ENCODE measurements at regions of chr15 and their contacts with region 1.

Region 1: DNA sequence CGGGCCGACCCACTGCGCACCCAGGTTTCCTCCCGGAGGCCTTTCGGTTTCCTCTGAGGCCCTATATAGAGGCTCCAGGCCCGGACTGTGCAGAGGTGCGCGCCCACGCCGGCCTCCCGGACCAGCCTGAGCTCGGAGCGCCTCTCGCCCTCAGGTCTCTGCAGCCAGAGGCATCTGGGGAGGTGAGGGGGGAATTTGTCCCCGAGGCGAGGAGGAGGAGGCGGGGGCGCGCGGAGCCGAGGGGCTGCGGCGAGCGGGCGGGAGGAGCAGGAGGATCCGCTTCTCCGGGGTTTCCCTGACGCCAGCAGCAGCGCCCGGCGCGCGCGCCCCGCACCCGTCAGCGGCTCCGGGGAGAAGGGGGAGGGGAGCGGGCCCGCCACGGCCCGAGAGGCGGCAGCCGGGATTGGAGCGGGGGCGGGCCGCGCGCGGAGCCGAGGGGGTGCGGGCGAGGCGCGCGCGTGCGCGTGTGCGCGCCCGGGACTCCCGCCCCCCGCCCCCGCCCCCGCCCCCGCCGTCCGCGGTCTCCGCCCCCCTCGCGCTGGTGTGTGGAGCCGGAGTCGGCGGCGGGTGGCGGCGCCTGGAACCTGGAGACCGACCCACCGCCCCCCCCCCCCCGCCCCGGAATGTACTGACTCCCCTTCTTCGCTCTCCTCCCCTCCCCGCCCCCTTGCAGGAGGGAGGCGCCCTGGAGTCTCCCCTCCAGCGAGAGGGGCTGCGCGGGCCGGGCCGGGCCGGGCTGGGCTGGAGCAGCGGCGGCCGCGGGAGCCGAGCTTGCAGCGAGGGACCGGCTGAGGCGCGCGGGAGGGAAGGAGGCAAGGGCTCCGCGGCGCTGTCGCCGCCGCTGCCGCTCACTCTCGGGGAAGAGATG is at the start of gene NEO1:
- DNase-seq: peak; percentile 85 to 90
- ATAC-seq: peak; percentile 92 to 98 (median 94)
- H3K4me3 ChIP-seq: peak within 1 kb of the TSS; percentile 67 to 95 (median 82)
- H3K27ac ChIP-seq: peak within 1 kb of the TSS; percentile 87 to 96 (median 90)
- H3K4me1 ChIP-seq: peaks cover 0 to 23% (median 14%) of the 10 kb centered on the region in 9 donors
- H3K27me3 ChIP-seq: peaks cover 0 to 92% (median 0%) of the 10 kb centered on the region in 7 donors
- CTCF ChIP-seq: peak in 1 of 9 donors; percentile 6
- total RNA-seq, gene NEO1: 8.7 to 16.9 (median 12.3) TPM

Region 2: DNA sequence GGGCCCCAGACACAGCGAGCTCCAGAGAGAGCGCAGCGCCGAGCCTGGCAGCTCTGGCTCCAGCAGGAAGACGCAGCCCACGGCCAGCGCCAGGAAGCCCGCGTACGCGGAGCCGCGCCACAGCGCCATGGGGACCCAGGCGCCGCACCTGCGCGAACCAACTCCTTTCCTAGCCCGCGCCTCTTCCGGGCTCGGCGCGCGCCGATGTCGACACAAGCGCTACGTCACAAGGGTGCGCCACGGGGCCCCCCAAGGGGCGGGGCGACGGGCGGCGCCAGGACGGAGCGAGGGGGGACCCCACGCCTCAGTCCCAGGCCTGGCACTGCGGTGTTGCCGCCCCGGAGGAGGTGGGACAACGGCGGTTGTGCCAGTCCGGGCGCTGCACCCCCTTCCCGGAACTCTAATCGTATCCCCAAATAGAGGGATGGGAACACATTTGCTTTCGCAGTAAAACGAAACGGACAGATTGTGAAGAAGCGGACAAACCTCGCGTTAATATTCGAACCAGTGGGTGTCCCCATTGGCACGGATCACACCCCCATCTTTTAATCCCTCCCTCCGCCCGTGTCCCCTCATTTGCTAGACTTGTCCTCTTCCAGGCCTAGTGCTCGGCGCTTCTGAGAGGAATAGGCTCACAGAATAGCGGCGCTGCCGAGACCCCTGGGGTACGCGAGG is 268.3 kb before region 1 on chr15 and contains the start of gene ADPGK:
- intact Hi-C with region 1: loop called in 2 of 10 experiments (anchors 5 to 10 kb)
- DNase-seq: peak; percentile 88 to 92
- ATAC-seq: peak; percentile 96 to 99 (median 98)
- H3K4me3 ChIP-seq: peak within 1 kb of the TSS; percentile 63 to 100 (median 92)
- H3K27ac ChIP-seq: peak within 1 kb of the TSS; percentile 77 to 99 (median 94)
- H3K4me1 ChIP-seq: peaks cover 0 to 43% (median 24%) of the 10 kb centered on the region in 9 donors
- H3K27me3 ChIP-seq: no peaks in the 10 kb centered on the region
- CTCF ChIP-seq: no peak
- total RNA-seq, gene ADPGK: 6.4 to 21.8 (median 10.4) TPM